ENCODE measurements at regions of chr10 and their contacts with region 1.

Region 1: GRCh38 chr10:35635576-35635975 is 6.5 kb downstream of the FZD8 start:
- DNase-seq: peak; percentile 41
- H3K4me3 Mint-ChIP-seq: no peak overlapping the region
- H3K27ac Mint-ChIP-seq: no peak overlapping the region
- H3K4me1 Mint-ChIP-seq: peaks cover 12% of the 10 kb centered on the region
- H3K27me3 Mint-ChIP-seq: peaks cover 28% of the 10 kb centered on the region

Region 2: DNA sequence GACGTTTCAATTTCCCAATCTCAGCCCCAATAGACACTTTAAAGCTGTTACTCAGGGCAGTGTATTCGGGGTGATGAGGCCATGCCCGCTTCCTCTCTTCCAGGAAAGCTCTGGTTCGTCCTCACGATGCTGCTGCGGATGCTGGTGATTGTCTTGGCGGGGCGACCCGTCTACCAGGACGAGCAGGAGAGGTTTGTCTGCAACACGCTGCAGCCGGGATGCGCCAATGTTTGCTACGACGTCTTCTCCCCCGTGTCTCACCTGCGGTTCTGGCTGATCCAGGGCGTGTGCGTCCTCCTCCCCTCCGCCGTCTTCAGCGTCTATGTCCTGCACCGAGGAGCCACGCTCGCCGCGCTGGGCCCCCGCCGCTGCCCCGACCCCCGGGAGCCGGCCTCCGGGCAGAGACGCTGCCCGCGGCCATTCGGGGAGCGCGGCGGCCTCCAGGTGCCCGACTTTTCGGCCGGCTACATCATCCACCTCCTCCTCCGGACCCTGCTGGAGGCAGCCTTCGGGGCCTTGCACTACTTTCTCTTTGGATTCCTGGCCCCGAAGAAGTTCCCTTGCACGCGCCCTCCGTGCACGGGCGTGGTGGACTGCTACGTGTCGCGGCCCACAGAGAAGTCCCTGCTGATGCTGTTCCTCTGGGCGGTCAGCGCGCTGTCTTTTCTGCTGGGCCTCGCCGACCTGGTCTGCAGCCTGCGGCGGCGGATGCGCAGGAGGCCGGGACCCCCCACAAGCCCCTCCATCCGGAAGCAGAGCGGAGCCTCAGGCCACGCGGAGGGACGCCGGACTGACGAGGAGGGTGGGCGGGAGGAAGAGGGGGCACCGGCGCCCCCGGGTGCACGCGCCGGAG is 27.9 kb before region 1 on chr10:
- CTCF ChIA-PET with region 1: no interaction called
- POLR2A ChIA-PET with region 1: no interaction called
- intact Hi-C with region 1: no loop called
- DNase-seq: peak; percentile 19
- H3K4me3 Mint-ChIP-seq: peak overlapping the region; percentile 43
- H3K27ac Mint-ChIP-seq: no peak overlapping the region
- H3K4me1 Mint-ChIP-seq: peaks cover 5% of the 10 kb centered on the region
- H3K27me3 Mint-ChIP-seq: peaks cover 46% of the 10 kb centered on the region

Region 3: GRCh38 chr10:35781643-35782035 is 146.1 kb after region 1 on chr10:
- CTCF ChIA-PET with region 1: interaction called, 5 read pairs
- POLR2A ChIA-PET with region 1: no interaction called
- intact Hi-C with region 1: loop called (anchors 10 kb)
- DNase-seq: no peak
- H3K4me3 Mint-ChIP-seq: no peak overlapping the region
- H3K27ac Mint-ChIP-seq: no peak overlapping the region
- H3K4me1 Mint-ChIP-seq: no peaks in the 10 kb centered on the region
- H3K27me3 Mint-ChIP-seq: peaks cover 7% of the 10 kb centered on the region

Region 4: DNA sequence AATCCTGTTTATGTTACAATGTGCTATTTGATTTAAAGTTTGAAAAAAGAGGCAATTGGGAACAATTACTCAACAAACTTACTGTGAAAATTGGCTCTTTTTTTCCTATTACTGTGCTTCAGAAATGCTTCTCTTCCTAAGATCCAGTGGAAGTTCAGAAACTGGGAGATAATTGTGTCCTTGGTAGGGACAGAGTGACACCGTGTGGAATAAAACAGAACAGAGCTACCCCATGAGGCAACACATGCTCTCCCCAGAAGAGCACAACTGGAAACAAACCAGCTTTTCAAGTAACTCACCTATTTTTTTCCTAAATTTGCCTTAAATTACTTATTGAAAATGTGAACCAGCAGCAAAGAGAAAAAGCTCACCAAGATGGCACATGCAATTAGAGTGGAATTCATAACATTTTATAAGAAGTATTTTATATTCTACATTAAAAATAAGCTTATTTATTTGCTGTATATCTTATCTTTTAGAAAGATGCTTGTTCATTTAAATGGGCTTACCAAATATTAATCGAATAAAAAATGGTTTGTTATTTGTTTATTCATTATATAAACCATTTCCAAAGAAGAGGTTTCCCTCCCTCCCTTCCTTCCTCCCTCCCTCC is 1143.8 kb after region 1 on chr10:
- CTCF ChIA-PET with region 1: interaction called, 3 read pairs
- POLR2A ChIA-PET with region 1: no interaction called
- intact Hi-C with region 1: loop called (anchors 5 kb)
- DNase-seq: no peak
- H3K4me3 Mint-ChIP-seq: no peak overlapping the region
- H3K27ac Mint-ChIP-seq: no peak overlapping the region
- H3K4me1 Mint-ChIP-seq: no peaks in the 10 kb centered on the region
- H3K27me3 Mint-ChIP-seq: no peaks in the 10 kb centered on the region

Region 5: DNA sequence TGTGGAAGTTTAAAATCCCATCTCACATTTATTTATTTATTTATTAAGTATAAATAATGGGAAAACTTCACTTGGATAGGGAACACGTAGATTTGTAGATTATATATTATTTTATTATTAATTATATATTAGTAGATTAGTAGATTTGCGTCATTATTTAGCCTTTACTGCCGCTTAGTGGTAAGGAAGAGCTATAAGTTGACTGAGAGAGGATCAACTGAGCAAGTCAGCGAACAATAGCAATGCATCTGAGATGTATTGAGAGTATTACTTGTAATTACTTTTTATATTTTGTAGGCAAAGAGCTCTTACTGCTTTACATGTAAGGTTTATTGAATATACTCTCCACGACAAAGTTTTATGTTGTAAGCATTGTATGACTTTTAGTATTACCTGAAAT is 1245.3 kb after region 1 on chr10:
- CTCF ChIA-PET with region 1: interaction called, 13 read pairs
- POLR2A ChIA-PET with region 1: no interaction called
- intact Hi-C with region 1: loop called (anchors 1 kb)
- DNase-seq: no peak
- H3K4me3 Mint-ChIP-seq: no peak overlapping the region
- H3K27ac Mint-ChIP-seq: no peak overlapping the region
- H3K4me1 Mint-ChIP-seq: no peaks in the 10 kb centered on the region
- H3K27me3 Mint-ChIP-seq: peaks cover 3% of the 10 kb centered on the region